ENCODE measurements at regions of chr11 and their contacts with region 1.

Region 1: DNA sequence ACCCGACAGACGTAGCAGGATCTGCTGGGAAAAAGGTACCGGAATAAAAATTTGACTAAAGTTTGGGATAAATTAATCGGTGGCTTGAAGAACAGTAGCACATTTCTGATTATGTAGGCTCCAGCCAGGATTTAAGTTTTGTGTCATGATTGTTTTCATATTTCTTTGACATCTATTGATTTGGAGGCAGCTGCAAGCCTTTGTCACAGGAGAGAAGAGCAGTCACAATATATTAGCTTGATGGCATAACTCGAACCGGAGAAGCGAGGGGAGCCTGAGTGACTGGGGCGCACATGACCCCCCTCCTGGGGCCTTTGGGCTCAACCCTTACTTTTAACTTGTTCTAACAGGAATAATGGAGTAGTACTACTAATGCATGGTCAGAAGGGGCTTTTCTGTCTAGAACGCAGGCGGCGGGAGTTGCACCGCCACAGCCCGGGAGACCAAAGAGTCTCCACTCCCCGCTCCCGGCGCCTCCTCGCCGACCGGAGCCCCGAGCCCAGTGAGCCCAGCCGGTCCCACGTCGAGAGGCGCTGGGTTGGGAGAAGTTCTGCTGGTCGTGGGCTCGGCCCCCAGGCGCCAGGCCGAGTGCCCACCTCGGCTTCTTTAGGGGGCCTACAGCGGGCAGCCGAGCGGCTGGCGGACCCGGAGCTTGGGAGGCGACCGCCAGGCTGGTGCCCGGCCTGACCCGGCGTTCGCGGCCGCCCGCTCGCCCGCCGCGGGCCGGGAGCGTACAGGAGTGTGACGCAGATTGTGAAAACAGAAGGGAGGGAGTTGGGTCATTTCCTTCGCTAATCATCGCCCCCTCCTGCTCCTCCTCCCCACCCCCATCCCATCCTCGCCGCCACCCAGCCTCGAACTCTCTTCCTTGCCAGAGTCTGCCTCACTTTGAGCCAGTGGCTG is 15.7 kb upstream of the PAX6 start:
- DNase-seq: peak in 1 of 2 experiments; percentile 71
- H3K4me3 ChIP-seq: peak overlapping the region; percentile 24 to 58 (median 37)
- H3K27ac ChIP-seq: no peak overlapping the region
- H3K4me1 ChIP-seq: peaks cover 24 to 38% (median 32%) of the 10 kb centered on the region in 4 experiments
- H3K27me3 ChIP-seq: peaks cover 41 to 71% (median 62%) of the 10 kb centered on the region in 4 experiments
- CTCF ChIP-seq: no peak
- EP300 ChIP-seq: no peak
- POLR2A ChIP-seq: no peak
- RAD21 ChIP-seq: no peak

Region 2: DNA sequence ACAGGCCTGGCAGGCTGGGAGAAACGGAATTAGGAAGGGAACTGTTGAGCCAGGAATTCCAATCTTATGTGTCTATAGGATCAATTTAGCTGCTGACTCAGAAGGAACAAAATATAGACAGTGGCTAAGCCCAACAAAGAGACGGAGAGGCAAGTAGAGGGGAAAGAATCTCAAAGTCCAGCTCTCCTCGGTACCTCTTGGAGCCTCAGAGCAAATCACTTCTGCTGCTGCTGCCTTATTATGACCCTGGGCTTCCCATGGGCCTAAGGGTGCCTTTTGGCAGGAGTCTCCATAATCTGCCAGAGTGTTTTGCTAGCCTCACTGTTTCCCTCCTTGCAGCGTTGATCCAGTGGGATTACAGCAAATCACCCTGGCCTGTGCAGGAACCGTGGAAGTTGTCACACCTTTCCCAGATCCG is 47.4 kb before region 1 on chr11:
- CTCF ChIA-PET with region 1: no interaction called
- POLR2A ChIA-PET with region 1: no interaction called
- DNase-seq: no peak
- H3K4me3 ChIP-seq: no peak overlapping the region
- H3K27ac ChIP-seq: no peak overlapping the region
- H3K4me1 ChIP-seq: peaks cover 0 to 3% (median 2%) of the 10 kb centered on the region in 4 experiments; a peak in 1 of 7 replicates
- H3K27me3 ChIP-seq: no peaks in the 10 kb centered on the region
- CTCF ChIP-seq: no peak
- EP300 ChIP-seq: no peak
- POLR2A ChIP-seq: no peak
- RAD21 ChIP-seq: no peak

Region 3: GRCh38 chr11:31804312-31805036 is 22.3 kb before region 1 on chr11:
- CTCF ChIA-PET with region 1: interaction called, 88 read pairs
- POLR2A ChIA-PET with region 1: interaction called, 18 read pairs
- DNase-seq: peak in 1 of 2 experiments; percentile 74
- H3K4me3 ChIP-seq: peak overlapping the region; percentile 11 to 56 (median 38); a peak in 6 of 8 replicates
- H3K27ac ChIP-seq: no peak overlapping the region
- H3K4me1 ChIP-seq: peaks cover 26 to 47% (median 30%) of the 10 kb centered on the region in 4 experiments
- H3K27me3 ChIP-seq: peaks cover 91 to 100% (median 97%) of the 10 kb centered on the region in 4 experiments
- CTCF ChIP-seq: no peak
- EP300 ChIP-seq: no peak
- POLR2A ChIP-seq: no peak
- RAD21 ChIP-seq: no peak

Region 4: DNA sequence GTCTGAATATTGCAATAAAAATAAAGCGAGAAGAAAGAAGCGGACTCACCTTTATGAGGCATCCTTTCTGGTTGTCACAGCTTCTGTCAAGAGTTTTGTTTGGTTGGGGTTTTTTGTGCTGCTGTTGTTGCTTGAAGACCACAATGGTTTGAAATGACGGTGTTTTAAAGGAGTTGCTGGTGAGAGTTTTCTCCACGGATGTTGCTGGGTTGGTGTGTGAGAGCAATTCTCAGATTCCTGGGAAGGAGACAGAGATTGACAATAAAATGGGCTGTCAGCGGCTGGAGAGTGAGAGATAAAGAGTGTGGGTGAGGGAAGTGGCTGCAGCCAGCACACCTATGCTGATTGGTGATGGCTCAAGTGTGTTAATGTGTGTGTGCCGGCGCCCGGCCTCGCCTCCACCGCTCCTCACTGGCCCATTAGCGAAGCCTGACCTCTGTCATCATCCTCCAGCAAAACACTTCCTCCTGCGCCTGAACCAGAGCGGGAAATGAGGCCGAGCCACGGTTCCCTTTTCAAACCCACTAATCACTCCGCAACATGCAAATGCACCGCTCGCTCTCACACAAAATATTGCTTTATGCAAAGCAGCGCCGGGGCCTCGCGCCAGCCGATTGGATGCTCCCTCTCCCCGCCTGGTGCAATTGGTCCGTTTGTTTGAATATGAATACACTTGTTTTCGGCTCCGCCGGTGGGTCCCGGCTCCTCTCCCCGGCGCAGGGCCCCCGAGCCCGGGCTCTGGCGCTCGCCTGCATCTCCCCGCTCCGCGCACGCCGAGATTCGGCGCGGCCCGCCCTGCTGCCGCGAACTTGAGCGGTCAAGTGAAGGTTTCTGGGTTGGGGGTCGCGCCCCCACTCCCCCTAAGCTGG is 15.8 kb before region 1 on chr11 and contains the start of gene PAX6:
- CTCF ChIA-PET with region 1: interaction called, 88 read pairs
- POLR2A ChIA-PET with region 1: interaction called, 18 read pairs
- DNase-seq: peak in 1 of 2 experiments; percentile 87
- H3K4me3 ChIP-seq: peak within 1 kb of the TSS; percentile 36 to 62 (median 50)
- H3K27ac ChIP-seq: no peak within 1 kb of the TSS
- H3K4me1 ChIP-seq: peaks cover 22 to 51% (median 41%) of the 10 kb centered on the region in 4 experiments
- H3K27me3 ChIP-seq: peaks cover 87 to 99% (median 96%) of the 10 kb centered on the region in 4 experiments
- CTCF ChIP-seq: no peak
- EP300 ChIP-seq: no peak
- POLR2A ChIP-seq: no peak
- RAD21 ChIP-seq: no peak
- total RNA-seq, gene PAX6: 0.21 and 0.30 TPM in 2 replicates

Region 5: GRCh38 chr11:31947051-31947769 is 120.4 kb after region 1 on chr11:
- CTCF ChIA-PET with region 1: no interaction called
- POLR2A ChIA-PET with region 1: no interaction called
- DNase-seq: no peak
- H3K4me3 ChIP-seq: no peak overlapping the region
- H3K27ac ChIP-seq: no peak overlapping the region
- H3K4me1 ChIP-seq: peaks cover 0 to 2% (median 0%) of the 10 kb centered on the region in 4 experiments; a peak in 1 of 7 replicates
- H3K27me3 ChIP-seq: no peaks in the 10 kb centered on the region
- CTCF ChIP-seq: no peak
- EP300 ChIP-seq: no peak
- POLR2A ChIP-seq: no peak
- RAD21 ChIP-seq: no peak

Measured in H1 (cell line).